ENCODE measurements at regions of chr7 and their contacts with region 1.

Region 1: GRCh38 chr7:22559829-22560489 is 60.0 kb upstream of the STEAP1B start:
- DNase-seq: peak; percentile 23 to 82
- ATAC-seq: peak; percentile 75 to 86 (median 77)
- H3K4me3 ChIP-seq: no peak overlapping the region
- H3K4me3 Mint-ChIP-seq: no peak overlapping the region
- H3K27ac ChIP-seq: no peak overlapping the region
- H3K27ac Mint-ChIP-seq: no peak overlapping the region
- H3K4me1 ChIP-seq: peaks cover 16% of the 10 kb centered on the region
- H3K4me1 Mint-ChIP-seq: peaks cover 0 to 4% of the 10 kb centered on the region in 2 donors
- H3K27me3 ChIP-seq: peaks cover 12% of the 10 kb centered on the region
- H3K27me3 Mint-ChIP-seq: peaks cover 8 to 23% of the 10 kb centered on the region in 2 donors
- CTCF ChIP-seq: peak; percentile 70

Region 2: GRCh38 chr7:22726345-22727185 is 166.6 kb after region 1 on chr7:
- intact Hi-C with region 1: loop called (anchors 2 kb)
- DNase-seq: peak in 1 of 2 donors; percentile 73
- ATAC-seq: peak; percentile 54 to 78 (median 61)
- H3K4me3 ChIP-seq: peak overlapping the region; percentile 29
- H3K4me3 Mint-ChIP-seq: peak overlapping the region; percentile 28
- H3K27ac ChIP-seq: peak overlapping the region; percentile 69
- H3K27ac Mint-ChIP-seq: no peak overlapping the region
- H3K4me1 ChIP-seq: peaks cover 6% of the 10 kb centered on the region
- H3K4me1 Mint-ChIP-seq: peaks cover 0 to 31% of the 10 kb centered on the region in 2 donors
- H3K27me3 ChIP-seq: peaks cover 2% of the 10 kb centered on the region
- H3K27me3 Mint-ChIP-seq: peaks cover 15 to 23% of the 10 kb centered on the region in 2 donors
- CTCF ChIP-seq: no peak

Region 3: GRCh38 chr7:22782616-22783232 is 222.8 kb after region 1 on chr7:
- intact Hi-C with region 1: loop called (anchors 2 kb)
- DNase-seq: peak; percentile 43 to 80
- ATAC-seq: peak; percentile 64 to 89 (median 82)
- H3K4me3 ChIP-seq: no peak overlapping the region
- H3K4me3 Mint-ChIP-seq: no peak overlapping the region
- H3K27ac ChIP-seq: no peak overlapping the region
- H3K27ac Mint-ChIP-seq: no peak overlapping the region
- H3K4me1 ChIP-seq: no peaks in the 10 kb centered on the region
- H3K4me1 Mint-ChIP-seq: no peaks in the 10 kb centered on the region
- H3K27me3 ChIP-seq: no peaks in the 10 kb centered on the region
- H3K27me3 Mint-ChIP-seq: peaks cover 4 to 5% of the 10 kb centered on the region in 2 donors
- CTCF ChIP-seq: peak; percentile 77

Region 4: GRCh38 chr7:23072048-23072447 is 512.1 kb after region 1 on chr7:
- intact Hi-C with region 1: no loop called
- DNase-seq: no peak
- ATAC-seq: no peak
- H3K4me3 ChIP-seq: no peak overlapping the region
- H3K4me3 Mint-ChIP-seq: no peak overlapping the region
- H3K27ac ChIP-seq: no peak overlapping the region
- H3K27ac Mint-ChIP-seq: no peak overlapping the region
- H3K4me1 ChIP-seq: no peaks in the 10 kb centered on the region
- H3K4me1 Mint-ChIP-seq: no peaks in the 10 kb centered on the region
- H3K27me3 ChIP-seq: no peaks in the 10 kb centered on the region
- H3K27me3 Mint-ChIP-seq: peaks cover 10 to 25% of the 10 kb centered on the region in 2 donors
- CTCF ChIP-seq: no peak